ENCODE measurements at regions of chr11 and their contacts with region 1.

Region 1: DNA sequence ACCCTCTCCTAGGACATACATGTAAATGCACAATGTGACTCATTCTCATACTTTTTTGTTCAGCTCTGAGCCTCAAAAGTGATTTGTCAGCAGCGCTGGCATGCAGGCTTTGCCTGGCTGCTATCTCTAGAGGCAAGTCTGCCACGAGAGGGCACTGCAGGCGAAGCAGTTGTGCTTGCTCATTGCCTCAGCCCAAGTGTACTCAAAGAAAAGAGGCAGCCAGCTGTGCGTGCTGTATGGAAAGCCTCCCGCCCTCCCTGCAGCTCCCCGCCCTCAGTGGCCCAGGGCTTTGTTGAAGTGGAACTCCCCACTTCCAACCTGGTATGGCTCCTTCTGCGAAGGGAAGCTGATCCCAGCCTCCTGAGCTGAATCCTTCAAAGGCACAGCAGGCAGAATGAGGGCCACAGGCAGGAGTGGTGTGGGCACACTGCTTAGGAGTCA is 16.3 kb downstream of the SDHAF2 start:
- DNase-seq: peak; percentile 83 to 95 (median 91)
- ATAC-seq: peak; percentile 57 to 85 (median 82)
- H3K4me3 ChIP-seq: no peak overlapping the region
- H3K27ac ChIP-seq: peak overlapping the region in 11 of 12 donors; percentile 3 to 90 (median 78)
- H3K4me1 ChIP-seq: peaks cover 7 to 41% (median 23%) of the 10 kb centered on the region in 12 donors
- H3K27me3 ChIP-seq: no peaks in the 10 kb centered on the region
- CTCF ChIP-seq: peak; percentile 64 to 94 (median 81)
- POLR2A ChIP-seq: no peak

Region 2: DNA sequence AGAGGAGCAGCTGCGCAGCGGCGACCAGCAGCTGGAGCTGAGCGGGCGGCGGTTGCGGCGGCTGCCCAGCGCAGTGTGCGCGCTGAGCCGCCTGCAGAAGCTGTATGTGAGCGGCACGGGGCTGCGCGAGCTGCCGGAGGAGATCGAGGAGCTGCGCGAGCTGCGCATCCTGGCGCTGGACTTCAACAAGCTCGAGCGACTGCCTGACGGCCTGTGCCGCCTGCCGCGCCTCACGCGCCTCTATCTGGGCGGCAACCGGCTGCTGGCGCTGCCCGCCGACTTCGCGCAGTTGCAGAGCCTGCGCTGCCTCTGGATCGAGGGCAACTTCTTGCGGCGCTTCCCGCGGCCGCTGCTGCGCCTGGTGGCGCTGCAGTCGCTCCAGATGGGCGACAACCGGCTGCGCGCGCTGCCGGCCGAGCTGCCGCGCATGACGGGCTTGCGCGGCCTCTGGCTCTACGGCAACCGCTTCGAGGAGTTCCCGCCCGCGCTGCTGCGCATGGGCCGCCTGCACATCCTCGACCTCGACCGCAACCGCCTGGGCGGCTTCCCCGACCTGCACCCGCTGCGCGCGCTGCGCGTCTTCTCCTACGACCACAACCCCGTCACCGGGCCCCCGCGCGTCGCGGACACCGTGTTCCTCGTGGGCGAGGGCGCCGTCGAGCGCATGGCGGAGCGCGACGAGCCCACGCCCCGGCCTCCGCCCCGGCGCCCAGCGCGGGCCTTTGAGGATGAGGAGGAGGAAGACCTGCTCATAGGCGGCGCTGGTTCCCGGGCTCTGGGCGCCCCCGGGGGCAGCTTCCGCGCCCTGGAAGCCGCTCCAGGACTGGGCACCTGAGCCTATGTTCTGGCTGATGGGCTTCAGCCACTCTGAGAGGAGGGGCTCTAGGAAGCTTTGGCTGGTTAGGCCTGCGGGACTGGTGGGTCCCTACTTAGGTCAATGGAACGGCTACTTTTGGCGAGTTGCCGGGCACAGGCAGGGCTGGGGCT is 63.1 kb after region 1 on chr11:
- intact Hi-C with region 1: loop called in 2 of 10 experiments (anchors 10 kb)
- DNase-seq: peak; percentile 54 to 85 (median 80)
- ATAC-seq: peak; percentile 46 to 94 (median 85)
- H3K4me3 ChIP-seq: peak overlapping the region in 11 of 12 donors; percentile 13 to 51 (median 44)
- H3K27ac ChIP-seq: peak overlapping the region in 11 of 12 donors; percentile 9 to 77 (median 61)
- H3K4me1 ChIP-seq: peaks cover 0 to 20% (median 9%) of the 10 kb centered on the region in 12 donors
- H3K27me3 ChIP-seq: peaks cover 7 to 70% (median 39%) of the 10 kb centered on the region in 9 donors
- CTCF ChIP-seq: peak; percentile 19 to 74 (median 52)
- POLR2A ChIP-seq: no peak

Region 3: DNA sequence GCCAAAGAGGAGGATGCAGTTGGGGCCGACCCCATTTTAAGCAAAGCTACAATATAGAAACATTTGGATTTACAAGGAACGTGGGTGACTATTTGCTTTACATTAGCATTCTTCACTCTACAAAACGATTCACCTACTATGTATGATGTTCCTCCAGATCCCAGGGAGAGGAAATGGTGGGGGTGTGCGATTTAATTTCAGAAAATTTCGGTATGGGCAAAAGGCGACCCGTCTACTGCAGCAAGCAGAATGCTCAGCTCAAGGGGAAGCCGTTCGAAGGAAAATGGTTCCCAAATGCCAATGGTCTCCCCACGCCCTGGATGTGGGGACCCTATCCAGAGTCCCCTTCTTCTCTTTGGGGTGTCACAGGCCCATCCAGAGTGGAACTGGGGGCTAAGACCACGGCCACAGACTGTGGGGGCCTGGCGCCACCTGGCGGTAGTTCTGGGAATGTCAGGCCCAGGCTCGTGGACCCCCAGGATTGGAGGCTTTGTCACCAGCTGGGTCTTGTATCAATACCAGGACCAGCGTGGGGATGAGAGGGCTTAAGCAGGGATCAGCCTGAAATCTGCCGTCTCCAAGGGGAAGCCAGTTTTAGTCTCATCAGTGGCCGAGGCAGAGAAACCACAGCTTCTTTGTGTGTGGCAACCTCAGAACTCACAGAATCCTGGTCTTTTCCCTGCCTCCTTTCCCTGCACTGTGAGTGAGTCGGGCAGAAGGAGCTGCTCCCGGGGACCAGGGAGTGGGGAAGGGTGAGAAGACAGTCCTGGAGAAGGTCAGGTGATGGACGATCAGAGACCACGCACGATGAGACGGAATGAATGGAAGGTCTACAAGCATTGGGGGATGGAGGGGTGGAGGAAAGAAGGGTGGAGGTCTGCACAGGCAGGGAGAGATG is 70.7 kb after region 1 on chr11:
- intact Hi-C with region 1: loop called in 8 of 10 experiments (anchors 1 to 10 kb)
- DNase-seq: no peak
- ATAC-seq: peak in 2 of 4 donors; percentile 31 to 40
- H3K4me3 ChIP-seq: peak overlapping the region in 2 of 12 donors; percentile 1 to 23
- H3K27ac ChIP-seq: peak overlapping the region in 3 of 12 donors; percentile 18 to 31 (median 19)
- H3K4me1 ChIP-seq: peaks cover 0 to 8% (median 1%) of the 10 kb centered on the region in 12 donors
- H3K27me3 ChIP-seq: peaks cover 0 to 7% (median 0%) of the 10 kb centered on the region in 9 donors
- CTCF ChIP-seq: peak; percentile 92 to 97 (median 96)
- POLR2A ChIP-seq: no peak

Region 4: GRCh38 chr11:61567286-61568061 is 121.2 kb after region 1 on chr11:
- intact Hi-C with region 1: no loop called
- DNase-seq: peak; percentile 79 to 86 (median 82)
- ATAC-seq: peak; percentile 29 to 83 (median 78)
- H3K4me3 ChIP-seq: no peak overlapping the region
- H3K27ac ChIP-seq: no peak overlapping the region
- H3K4me1 ChIP-seq: peaks cover 0 to 33% (median 7%) of the 10 kb centered on the region in 12 donors
- H3K27me3 ChIP-seq: peaks cover 0 to 10% (median 0%) of the 10 kb centered on the region in 9 donors
- CTCF ChIP-seq: peak; percentile 15 to 63 (median 45)
- POLR2A ChIP-seq: no peak

Region 5: GRCh38 chr11:61581030-61581928 is 135.0 kb after region 1 on chr11 and contains the start of gene SYT7:
- intact Hi-C with region 1: loop called in 3 of 10 experiments (anchors 2 to 5 kb)
- DNase-seq: peak; percentile 95 to 97 (median 96)
- ATAC-seq: peak; percentile 70 to 84 (median 84)
- H3K4me3 ChIP-seq: peak within 1 kb of the TSS; percentile 44 to 83 (median 62)
- H3K27ac ChIP-seq: peak within 1 kb of the TSS; percentile 26 to 92 (median 78)
- H3K4me1 ChIP-seq: peaks cover 0 to 36% (median 14%) of the 10 kb centered on the region in 12 donors
- H3K27me3 ChIP-seq: peaks cover 0 to 36% (median 2%) of the 10 kb centered on the region in 9 donors
- CTCF ChIP-seq: peak in 5 of 12 donors; percentile 3 to 17 (median 9)
- POLR2A ChIP-seq: peak in 1 of 2 donors; percentile 49
- total RNA-seq, gene SYT7: 12.4 to 22.7 (median 17.4) TPM

Region 6: GRCh38 chr11:61627567-61628445 is 181.6 kb after region 1 on chr11:
- intact Hi-C with region 1: loop called in 3 of 10 experiments (anchors 5 to 10 kb)
- DNase-seq: peak; percentile 71 to 81 (median 75)
- ATAC-seq: peak; percentile 51 to 84 (median 80)
- H3K4me3 ChIP-seq: no peak overlapping the region
- H3K27ac ChIP-seq: peak overlapping the region in 8 of 12 donors; percentile 81 to 94 (median 88)
- H3K4me1 ChIP-seq: peaks cover 0 to 24% (median 10%) of the 10 kb centered on the region in 12 donors
- H3K27me3 ChIP-seq: no peaks in the 10 kb centered on the region
- CTCF ChIP-seq: peak; percentile 58 to 89 (median 82)
- POLR2A ChIP-seq: no peak

Region 7: GRCh38 chr11:61639816-61640443 is 193.7 kb after region 1 on chr11:
- intact Hi-C with region 1: loop called in 5 of 10 experiments (anchors 1 to 10 kb)
- DNase-seq: no peak
- ATAC-seq: no peak
- H3K4me3 ChIP-seq: no peak overlapping the region
- H3K27ac ChIP-seq: no peak overlapping the region
- H3K4me1 ChIP-seq: peaks cover 0 to 6% (median 0%) of the 10 kb centered on the region in 12 donors
- H3K27me3 ChIP-seq: peaks cover 0 to 3% (median 0%) of the 10 kb centered on the region in 9 donors
- CTCF ChIP-seq: no peak
- POLR2A ChIP-seq: no peak